Calu3 (cell line): ENCODE measurements at regions of chr17 and their contacts with region 1.

Region 1: GRCh38 chr17:40410082-40410481 is 7.6 kb downstream of the TOP2A start:
- DNase-seq: no peak
- H3K4me3 Mint-ChIP-seq: no peak overlapping the region
- H3K27ac Mint-ChIP-seq: peak overlapping the region; percentile 11
- H3K4me1 Mint-ChIP-seq: peaks cover 24% of the 10 kb centered on the region
- H3K27me3 Mint-ChIP-seq: no peaks in the 10 kb centered on the region
- CTCF ChIP-seq: no peak

Region 2: GRCh38 chr17:40331743-40332641 is 78.1 kb before region 1 on chr17:
- CTCF ChIA-PET with region 1: no interaction called
- intact Hi-C with region 1: no loop called
- DNase-seq: peak; percentile 87
- H3K4me3 Mint-ChIP-seq: peak overlapping the region; percentile 15
- H3K27ac Mint-ChIP-seq: peak overlapping the region; percentile 3
- H3K4me1 Mint-ChIP-seq: peaks cover 71% of the 10 kb centered on the region
- H3K27me3 Mint-ChIP-seq: no peaks in the 10 kb centered on the region
- CTCF ChIP-seq: peak; percentile 47

Region 3: DNA sequence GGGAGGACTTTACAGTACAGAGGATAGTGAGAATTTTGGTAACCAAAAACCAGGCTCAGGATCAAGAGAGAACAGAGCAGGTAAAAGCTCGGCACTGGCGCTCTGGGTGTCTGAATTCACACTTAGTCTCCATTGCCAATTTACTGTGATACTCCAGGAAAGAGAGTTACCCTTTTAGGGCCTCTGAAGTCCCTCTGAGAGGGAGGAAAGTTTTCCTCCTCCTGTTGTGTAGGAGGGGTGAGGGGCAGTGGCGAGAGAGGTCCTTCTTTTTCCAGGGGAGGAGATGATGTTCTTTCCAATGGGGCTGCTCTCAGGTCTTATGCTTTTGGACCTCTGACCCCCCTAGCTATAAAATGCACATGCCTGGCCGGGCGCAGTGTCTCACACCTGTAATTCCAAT is 96.7 kb after region 1 on chr17:
- CTCF ChIA-PET with region 1: no interaction called
- intact Hi-C with region 1: no loop called
- DNase-seq: no peak
- H3K4me3 Mint-ChIP-seq: no peak overlapping the region
- H3K27ac Mint-ChIP-seq: no peak overlapping the region
- H3K4me1 Mint-ChIP-seq: peaks cover 15% of the 10 kb centered on the region
- H3K27me3 Mint-ChIP-seq: peaks cover 56% of the 10 kb centered on the region
- CTCF ChIP-seq: no peak

Region 4: GRCh38 chr17:40542558-40543411 is 132.7 kb after region 1 on chr17:
- CTCF ChIA-PET with region 1: interaction called, 498 read pairs
- intact Hi-C with region 1: no loop called
- DNase-seq: no peak
- H3K4me3 Mint-ChIP-seq: no peak overlapping the region
- H3K27ac Mint-ChIP-seq: no peak overlapping the region
- H3K4me1 Mint-ChIP-seq: no peaks in the 10 kb centered on the region
- H3K27me3 Mint-ChIP-seq: peaks cover 50% of the 10 kb centered on the region
- CTCF ChIP-seq: no peak

Region 5: GRCh38 chr17:40775945-40776344 is 365.9 kb after region 1 on chr17:
- CTCF ChIA-PET with region 1: no interaction called
- intact Hi-C with region 1: no loop called
- DNase-seq: no peak
- H3K4me3 Mint-ChIP-seq: no peak overlapping the region
- H3K27ac Mint-ChIP-seq: no peak overlapping the region
- H3K4me1 Mint-ChIP-seq: no peaks in the 10 kb centered on the region
- H3K27me3 Mint-ChIP-seq: peaks cover 83% of the 10 kb centered on the region
- CTCF ChIP-seq: no peak